AG04450 (cell line): ENCODE measurements at regions of chr2 and their contacts with region 1.

Region 1: DNA sequence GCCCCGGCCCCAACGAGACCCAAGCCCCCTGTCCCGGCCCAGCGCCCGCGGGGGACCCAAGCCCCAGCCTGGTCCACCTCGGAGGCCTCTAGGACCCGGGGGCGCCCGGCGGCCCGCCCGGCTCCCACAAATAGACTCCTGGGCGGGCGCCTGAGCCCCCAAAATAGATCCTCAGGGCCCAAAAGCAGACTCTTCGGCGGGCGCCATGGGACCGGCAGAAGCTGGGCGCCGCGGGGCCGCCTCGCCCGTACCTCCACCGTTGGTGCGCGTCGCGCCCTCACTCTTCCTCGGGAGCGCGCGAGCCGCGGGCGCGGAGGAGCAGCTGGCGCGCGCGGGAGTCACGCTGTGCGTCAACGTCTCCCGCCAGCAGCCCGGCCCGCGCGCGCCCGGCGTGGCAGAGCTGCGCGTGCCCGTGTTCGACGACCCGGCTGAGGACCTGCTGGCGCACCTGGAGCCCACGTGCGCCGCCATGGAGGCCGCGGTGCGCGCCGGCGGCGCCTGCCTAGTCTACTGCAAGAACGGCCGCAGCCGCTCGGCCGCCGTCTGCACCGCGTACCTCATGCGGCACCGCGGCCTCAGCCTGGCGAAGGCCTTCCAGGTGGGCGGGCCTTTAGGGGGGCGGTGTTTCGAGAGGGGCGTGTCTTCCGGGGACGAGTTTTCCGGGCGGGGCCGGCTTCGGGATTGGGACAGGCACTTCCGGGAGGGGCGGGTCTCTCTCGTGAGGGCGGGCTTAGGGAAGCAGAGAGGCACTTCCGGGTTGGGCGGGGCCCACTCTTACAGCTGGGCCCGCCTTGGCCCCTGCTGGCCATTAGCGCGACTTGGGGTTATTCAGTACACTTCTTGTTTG is 546 bp downstream of the DUSP28 start:
- DNase-seq: peak; percentile 93
- H3K4me3 ChIP-seq: peak overlapping the region; percentile 70
- H3K27ac ChIP-seq: peak overlapping the region; percentile 88
- H3K27me3 ChIP-seq: no peaks in the 10 kb centered on the region
- CTCF ChIP-seq: peak; percentile 40

Region 2: DNA sequence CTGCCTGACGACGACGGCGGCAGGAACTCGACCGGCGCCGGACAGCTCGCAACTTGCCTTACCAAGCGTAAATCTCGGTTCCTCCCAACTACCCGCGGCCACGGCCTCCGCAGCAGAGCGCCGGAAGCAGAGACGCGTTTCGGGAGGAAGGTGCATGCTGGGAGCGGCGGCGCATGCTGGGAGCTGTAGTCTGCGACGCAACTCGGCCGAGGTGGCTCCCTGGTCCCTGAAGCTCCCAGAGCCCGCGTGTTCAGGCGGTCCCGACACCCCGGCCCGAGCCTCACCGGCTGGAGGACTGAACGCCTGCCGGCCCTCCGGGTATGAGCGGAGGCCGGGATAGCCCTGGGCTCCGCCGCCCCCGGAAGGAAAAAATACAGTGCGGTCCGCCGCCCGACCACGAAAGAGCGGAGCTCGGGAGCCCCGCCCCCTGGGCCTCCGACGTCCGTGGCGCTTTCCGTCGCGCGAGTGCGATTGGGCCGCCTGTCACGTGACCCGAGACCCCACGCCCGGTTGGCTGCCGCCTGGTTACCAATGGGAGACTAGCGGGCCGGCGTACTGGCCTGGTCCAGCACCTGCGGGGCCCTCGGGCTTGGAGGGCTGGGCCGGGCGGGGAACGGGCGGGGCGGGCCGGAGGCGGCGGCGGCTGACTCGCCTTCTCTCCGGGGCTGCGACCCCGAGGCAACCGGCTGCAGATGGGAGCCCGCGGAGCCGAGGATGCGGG is 25.7 kb after region 1 on chr2 and contains the start of gene CAPN10:
- CTCF ChIA-PET with region 1: interaction called, 31 read pairs
- POLR2A ChIA-PET with region 1: interaction called, 22 read pairs
- DNase-seq: peak; percentile 78
- H3K4me3 ChIP-seq: peak within 1 kb of the TSS; percentile 99
- H3K27ac ChIP-seq: peak within 1 kb of the TSS; percentile 78
- H3K27me3 ChIP-seq: no peaks in the 10 kb centered on the region
- CTCF ChIP-seq: no peak
- polyA plus RNA-seq, gene CAPN10: 5.6 and 7.5 TPM in 2 replicates